ENCODE measurements at regions of chr4 and their contacts with region 1.

Region 1: GRCh38 chr4:102734591-102735385 is 26.0 kb downstream of the MANBA start:
- DNase-seq: no peak
- ATAC-seq: peak; percentile 59

Region 2: DNA sequence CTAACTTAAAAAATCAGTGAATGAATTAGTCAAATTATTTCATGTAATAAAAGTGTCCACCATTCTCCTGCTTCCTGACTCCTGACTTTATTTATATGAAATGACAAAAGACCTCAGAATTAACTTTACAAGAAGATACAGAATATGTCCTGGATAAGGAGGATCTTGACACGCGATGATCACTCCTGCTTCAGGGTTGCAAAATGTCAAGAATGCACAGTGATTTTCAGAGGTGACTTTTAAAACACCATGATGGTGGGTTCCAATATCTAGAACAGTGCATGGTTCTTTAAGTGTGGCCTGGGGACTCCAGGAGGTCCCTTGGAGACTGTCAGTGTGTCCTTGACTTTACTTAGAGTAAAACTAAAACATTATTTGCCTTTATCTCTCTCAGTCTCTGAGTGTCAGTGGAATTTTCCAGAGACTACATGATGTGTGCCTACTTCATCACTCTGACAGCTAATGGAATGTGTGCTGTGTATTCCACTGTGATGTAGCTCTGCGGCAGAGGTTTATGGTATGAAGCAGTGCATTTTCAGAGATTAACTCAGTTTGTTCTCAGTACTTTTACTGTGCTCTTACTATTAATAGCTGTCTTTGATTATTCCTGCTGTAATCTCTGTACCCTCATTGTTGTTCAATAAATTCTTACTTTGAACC is 59.8 kb before region 1 on chr4:
- intact Hi-C with region 1: loop called (anchors 10 kb)
- DNase-seq: no peak
- ATAC-seq: peak; percentile 92